Breast epithelium (tissue), 4 donors: ENCODE measurements at regions of chr11 and their contacts with region 1.

Region 1: GRCh38 chr11:132844956-132845696 is 687.2 kb downstream of the OPCML start:
- DNase-seq: no peak
- H3K4me3 ChIP-seq: no peak overlapping the region
- H3K27ac ChIP-seq: no peak overlapping the region
- H3K4me1 ChIP-seq: no peaks in the 10 kb centered on the region
- H3K27me3 ChIP-seq: no peaks in the 10 kb centered on the region
- CTCF ChIP-seq: no peak
- POLR2A ChIP-seq: no peak

Region 2: GRCh38 chr11:131099013-131099412 is 1746.1 kb before region 1 on chr11:
- intact Hi-C with region 1: loop called (anchors 5 kb)
- DNase-seq: no peak
- H3K4me3 ChIP-seq: no peak overlapping the region
- H3K27ac ChIP-seq: no peak overlapping the region
- H3K4me1 ChIP-seq: no peaks in the 10 kb centered on the region
- H3K27me3 ChIP-seq: no peaks in the 10 kb centered on the region
- CTCF ChIP-seq: no peak
- POLR2A ChIP-seq: no peak